Naive thymus-derived CD4-positive, alpha-beta T cell (primary cell): ENCODE measurements at regions of chr12 and their contacts with region 1.

Region 1: GRCh38 chr12:89244536-89244935 is 107.8 kb downstream of the DUSP6 start:
- DNase-seq: peak in 7 of 9 donors; percentile 28 to 67 (median 56)
- ATAC-seq: peak; percentile 76
- H3K4me3 ChIP-seq: peak overlapping the region; percentile 23
- H3K4me3 Mint-ChIP-seq: peak overlapping the region; percentile 18 to 64 (median 52)
- H3K27ac ChIP-seq: no peak overlapping the region
- H3K27ac Mint-ChIP-seq: peak overlapping the region; percentile 2 to 93 (median 60)
- H3K4me1 ChIP-seq: peaks cover 24 to 28% of the 10 kb centered on the region in 2 donors
- H3K4me1 Mint-ChIP-seq: peaks cover 32 to 56% (median 48%) of the 10 kb centered on the region in 7 donors
- H3K27me3 ChIP-seq: no peaks in the 10 kb centered on the region
- H3K27me3 Mint-ChIP-seq: no peaks in the 10 kb centered on the region

Region 2: GRCh38 chr12:89040146-89040964 is 204.2 kb before region 1 on chr12:
- CTCF ChIA-PET with region 1: no interaction called
- POLR2A ChIA-PET with region 1: no interaction called
- intact Hi-C with region 1: loop called in 1 of 2 experiments (anchors 1 kb)
- DNase-seq: peak; percentile 13 to 76 (median 43)
- ATAC-seq: peak; percentile 93
- H3K4me3 ChIP-seq: no peak overlapping the region
- H3K4me3 Mint-ChIP-seq: peak overlapping the region; percentile 29 to 77 (median 54)
- H3K27ac ChIP-seq: no peak overlapping the region
- H3K27ac Mint-ChIP-seq: peak overlapping the region; percentile 1 to 88 (median 68)
- H3K4me1 ChIP-seq: peaks cover 7 to 12% of the 10 kb centered on the region in 2 donors
- H3K4me1 Mint-ChIP-seq: peaks cover 21 to 60% (median 31%) of the 10 kb centered on the region in 7 donors
- H3K27me3 ChIP-seq: no peaks in the 10 kb centered on the region
- H3K27me3 Mint-ChIP-seq: no peaks in the 10 kb centered on the region

Region 3: GRCh38 chr12:89162704-89163261 is 81.8 kb before region 1 on chr12:
- CTCF ChIA-PET with region 1: no interaction called
- POLR2A ChIA-PET with region 1: no interaction called
- intact Hi-C with region 1: loop called in 1 of 2 experiments (anchors 1 kb)
- DNase-seq: peak in 1 of 9 donors; percentile 54
- ATAC-seq: peak; percentile 77
- H3K4me3 ChIP-seq: no peak overlapping the region
- H3K4me3 Mint-ChIP-seq: no peak overlapping the region
- H3K27ac ChIP-seq: no peak overlapping the region
- H3K27ac Mint-ChIP-seq: no peak overlapping the region
- H3K4me1 ChIP-seq: peaks cover 0 to 9% of the 10 kb centered on the region in 2 donors
- H3K4me1 Mint-ChIP-seq: peaks cover 10 to 31% (median 20%) of the 10 kb centered on the region in 7 donors
- H3K27me3 ChIP-seq: no peaks in the 10 kb centered on the region
- H3K27me3 Mint-ChIP-seq: no peaks in the 10 kb centered on the region

Region 4: GRCh38 chr12:89225808-89226411 is 18.6 kb before region 1 on chr12:
- CTCF ChIA-PET with region 1: interaction called, 4 read pairs
- POLR2A ChIA-PET with region 1: interaction called, 3 read pairs
- intact Hi-C with region 1: loop called (anchors 1 kb)
- DNase-seq: peak in 1 of 9 donors; percentile 47
- ATAC-seq: peak; percentile 26
- H3K4me3 ChIP-seq: no peak overlapping the region
- H3K4me3 Mint-ChIP-seq: peak overlapping the region in 8 of 10 donors; percentile 26 to 74 (median 54)
- H3K27ac ChIP-seq: no peak overlapping the region
- H3K27ac Mint-ChIP-seq: peak overlapping the region; percentile 38 to 94 (median 63)
- H3K4me1 ChIP-seq: peaks cover 16 to 17% of the 10 kb centered on the region in 2 donors
- H3K4me1 Mint-ChIP-seq: peaks cover 18 to 76% (median 48%) of the 10 kb centered on the region in 7 donors
- H3K27me3 ChIP-seq: no peaks in the 10 kb centered on the region
- H3K27me3 Mint-ChIP-seq: no peaks in the 10 kb centered on the region

Region 5: GRCh38 chr12:89280833-89281538 is 36.5 kb after region 1 on chr12:
- CTCF ChIA-PET with region 1: interaction called, 4 read pairs
- POLR2A ChIA-PET with region 1: interaction called, 9 read pairs
- intact Hi-C with region 1: loop called (anchors 1 to 2 kb)
- DNase-seq: peak in 7 of 9 donors; percentile 7 to 79 (median 52)
- ATAC-seq: peak; percentile 90
- H3K4me3 ChIP-seq: peak overlapping the region; percentile 1
- H3K4me3 Mint-ChIP-seq: peak overlapping the region in 8 of 10 donors; percentile 44 to 80 (median 64)
- H3K27ac ChIP-seq: no peak overlapping the region
- H3K27ac Mint-ChIP-seq: peak overlapping the region in 8 of 9 donors; percentile 38 to 89 (median 66)
- H3K4me1 ChIP-seq: peaks cover 18 to 22% of the 10 kb centered on the region in 2 donors
- H3K4me1 Mint-ChIP-seq: peaks cover 15 to 47% (median 37%) of the 10 kb centered on the region in 7 donors
- H3K27me3 ChIP-seq: no peaks in the 10 kb centered on the region
- H3K27me3 Mint-ChIP-seq: no peaks in the 10 kb centered on the region

Region 6: GRCh38 chr12:89461649-89462612 is 217.4 kb after region 1 on chr12:
- CTCF ChIA-PET with region 1: interaction called, 3 read pairs
- POLR2A ChIA-PET with region 1: no interaction called
- intact Hi-C with region 1: loop called in 1 of 2 experiments (anchors 1 kb)
- DNase-seq: peak in 6 of 9 donors; percentile 26 to 68 (median 54)
- ATAC-seq: peak; percentile 95
- H3K4me3 ChIP-seq: no peak overlapping the region
- H3K4me3 Mint-ChIP-seq: peak overlapping the region in 7 of 10 donors; percentile 10 to 81 (median 53)
- H3K27ac ChIP-seq: no peak overlapping the region
- H3K27ac Mint-ChIP-seq: peak overlapping the region in 6 of 9 donors; percentile 5 to 71 (median 41)
- H3K4me1 ChIP-seq: peaks cover 0 to 3% of the 10 kb centered on the region in 2 donors
- H3K4me1 Mint-ChIP-seq: peaks cover 7 to 52% (median 18%) of the 10 kb centered on the region in 7 donors
- H3K27me3 ChIP-seq: no peaks in the 10 kb centered on the region
- H3K27me3 Mint-ChIP-seq: no peaks in the 10 kb centered on the region

Region 7: GRCh38 chr12:89524541-89525285 is 280.2 kb after region 1 on chr12 and contains the start of gene GALNT4:
- CTCF ChIA-PET with region 1: no interaction called
- POLR2A ChIA-PET with region 1: no interaction called
- intact Hi-C with region 1: loop called (anchors 1 to 2 kb)
- DNase-seq: peak; percentile 61 to 78 (median 74)
- ATAC-seq: peak; percentile 87
- H3K4me3 ChIP-seq: peak within 1 kb of the TSS; percentile 90
- H3K4me3 Mint-ChIP-seq: peak within 1 kb of the TSS; percentile 87 to 98 (median 96)
- H3K27ac ChIP-seq: peak within 1 kb of the TSS; percentile 77
- H3K27ac Mint-ChIP-seq: peak within 1 kb of the TSS; percentile 67 to 96 (median 89)
- H3K4me1 ChIP-seq: peaks cover 30 to 35% of the 10 kb centered on the region in 2 donors
- H3K4me1 Mint-ChIP-seq: peaks cover 30 to 66% (median 55%) of the 10 kb centered on the region in 7 donors
- H3K27me3 ChIP-seq: no peaks in the 10 kb centered on the region
- H3K27me3 Mint-ChIP-seq: no peaks in the 10 kb centered on the region
- total RNA-seq, gene GALNT4: 6.0 to 14.5 (median 9.9) TPM